ENCODE measurements at regions of chr3 and their contacts with region 1.

Region 1: GRCh38 chr3:121883507-121883906 is 10.7 kb upstream of the SLC15A2 start:
- DNase-seq: peak; percentile 77
- H3K4me3 ChIP-seq: no peak overlapping the region
- H3K27ac ChIP-seq: no peak overlapping the region
- H3K4me1 ChIP-seq: no peaks in the 10 kb centered on the region
- H3K27me3 ChIP-seq: no peaks in the 10 kb centered on the region
- CTCF ChIP-seq: peak; percentile 76

Region 2: GRCh38 chr3:121718205-121718846 is 165.2 kb before region 1 on chr3:
- CTCF ChIA-PET with region 1: no interaction called
- POLR2A ChIA-PET with region 1: no interaction called
- intact Hi-C with region 1: no loop called
- DNase-seq: no peak
- H3K4me3 ChIP-seq: no peak overlapping the region
- H3K27ac ChIP-seq: no peak overlapping the region
- H3K4me1 ChIP-seq: no peaks in the 10 kb centered on the region
- H3K27me3 ChIP-seq: no peaks in the 10 kb centered on the region
- CTCF ChIP-seq: no peak

Region 3: DNA sequence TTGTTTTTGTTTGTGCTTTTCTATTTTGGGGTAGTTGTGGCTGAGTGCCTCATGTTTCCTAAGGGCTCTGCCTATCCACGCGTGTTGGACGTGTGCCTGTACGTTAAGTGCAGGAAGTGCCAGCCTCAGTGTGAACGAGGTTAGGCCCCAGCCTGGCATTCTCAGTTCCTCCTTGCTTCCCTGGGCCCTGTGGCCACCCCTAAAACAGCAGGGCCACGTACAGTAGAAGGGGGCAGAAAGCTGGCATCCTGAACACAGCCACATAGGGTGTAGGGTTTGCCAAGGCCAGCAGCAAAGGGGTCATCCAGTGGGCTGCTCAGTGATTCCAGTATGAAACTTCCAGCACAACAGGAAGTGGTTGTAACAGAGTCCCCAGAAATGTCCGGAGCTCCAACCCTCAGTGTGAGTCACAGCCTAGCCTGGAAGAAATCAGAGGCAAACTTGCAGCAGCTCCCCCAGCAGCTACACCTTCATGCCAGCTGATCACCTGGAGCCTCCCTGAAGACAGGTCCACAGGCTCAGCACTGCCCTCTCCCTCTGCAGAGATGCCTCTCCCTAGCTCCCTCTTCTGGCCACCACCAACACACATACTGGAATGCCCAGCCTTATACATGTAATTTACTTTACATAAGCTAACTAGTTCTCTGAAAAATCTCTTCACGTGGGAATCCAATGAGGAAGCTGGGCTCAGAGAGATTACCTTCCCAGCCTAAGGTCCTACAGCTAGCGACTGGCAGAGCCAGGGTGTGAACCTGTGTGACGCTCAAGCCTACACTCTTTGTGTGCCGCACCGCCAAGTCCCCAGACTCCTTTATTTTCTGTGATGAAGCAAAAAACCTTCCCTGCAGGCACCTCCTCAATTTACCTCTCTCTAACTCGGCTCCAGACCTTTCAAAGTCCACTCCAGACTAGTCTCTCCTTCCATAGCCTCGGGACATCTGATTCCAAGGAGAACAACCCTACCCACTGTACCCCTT is 111.9 kb after region 1 on chr3:
- CTCF ChIA-PET with region 1: interaction called, 3 read pairs
- POLR2A ChIA-PET with region 1: no interaction called
- intact Hi-C with region 1: loop called (anchors 5 kb)
- DNase-seq: peak; percentile 66
- H3K4me3 ChIP-seq: no peak overlapping the region
- H3K27ac ChIP-seq: no peak overlapping the region
- H3K4me1 ChIP-seq: no peaks in the 10 kb centered on the region
- H3K27me3 ChIP-seq: no peaks in the 10 kb centered on the region
- CTCF ChIP-seq: peak; percentile 80

Region 4: DNA sequence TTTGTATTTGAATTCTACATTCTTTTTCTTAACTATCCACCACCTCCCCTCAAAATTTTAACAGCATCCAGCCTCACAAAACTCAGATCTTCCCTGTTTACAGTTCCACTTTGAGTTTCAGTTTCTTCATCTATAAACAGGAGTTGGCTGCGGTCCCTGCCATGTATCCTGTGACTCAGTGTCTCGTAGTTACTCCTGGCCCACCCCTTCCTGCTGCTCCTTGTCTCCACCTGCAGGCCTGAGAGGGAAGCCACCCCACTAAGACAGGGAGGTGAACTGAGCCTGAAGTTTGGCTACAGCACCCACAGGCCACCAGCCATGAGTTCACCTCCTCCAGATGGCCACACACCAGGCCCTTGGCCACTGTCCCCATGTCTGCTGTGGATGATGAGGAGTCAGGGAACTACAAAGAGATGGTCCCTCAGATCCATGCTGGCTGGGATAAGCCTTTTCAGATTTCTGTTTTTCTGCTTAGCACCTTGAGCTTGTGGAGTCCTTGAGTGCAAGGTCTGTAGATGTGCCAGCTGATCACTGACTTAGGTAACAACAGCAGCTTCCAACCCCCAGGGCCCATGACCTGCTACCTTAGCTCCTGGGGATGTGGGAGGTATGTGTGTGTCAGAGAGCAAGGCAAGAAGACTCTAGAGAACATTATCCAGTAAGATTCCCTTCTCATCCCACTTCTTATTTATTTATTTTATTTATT is 209.1 kb after region 1 on chr3:
- CTCF ChIA-PET with region 1: no interaction called
- POLR2A ChIA-PET with region 1: no interaction called
- intact Hi-C with region 1: loop called (anchors 10 kb)
- DNase-seq: peak; percentile 44
- H3K4me3 ChIP-seq: no peak overlapping the region
- H3K27ac ChIP-seq: no peak overlapping the region
- H3K4me1 ChIP-seq: no peaks in the 10 kb centered on the region
- H3K27me3 ChIP-seq: no peaks in the 10 kb centered on the region
- CTCF ChIP-seq: peak; percentile 63

Measured in A673 (cell line).